ENCODE measurements at regions of chrX and their contacts with region 1.

Region 1: DNA sequence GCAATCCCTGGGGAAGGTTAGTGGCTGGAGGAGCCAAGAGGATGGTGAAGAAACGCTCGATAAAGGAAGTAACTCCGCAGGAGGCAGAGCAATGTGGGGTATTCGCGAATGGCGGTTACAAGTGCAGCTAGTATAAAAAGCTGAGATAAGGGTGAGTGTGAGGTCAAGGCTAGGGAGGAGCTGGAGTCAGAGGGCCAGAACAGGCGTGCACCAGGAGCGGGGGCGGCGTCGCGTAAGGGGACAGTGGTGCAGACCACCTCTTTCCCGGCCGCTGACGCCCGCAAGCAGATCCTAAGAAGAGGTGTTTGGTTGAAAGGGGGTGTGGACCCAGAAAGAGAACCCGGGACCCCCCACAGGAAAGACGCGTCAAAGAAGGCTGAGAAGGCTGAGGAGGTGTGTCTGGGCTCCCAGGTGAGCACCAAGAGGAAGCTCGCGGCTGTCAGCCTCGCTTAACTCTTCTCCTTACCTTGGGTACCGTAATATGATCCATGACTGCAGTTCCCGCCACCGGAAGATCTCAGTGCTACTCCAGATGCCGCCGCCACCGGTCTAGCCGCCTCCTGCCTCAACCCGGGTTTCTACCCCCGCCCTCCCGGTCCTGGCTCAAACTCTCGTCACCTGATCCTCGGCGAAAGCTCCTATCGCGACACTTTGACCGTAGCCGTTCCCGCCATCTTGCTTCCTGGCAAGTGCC is at the start of gene MTMR8:
- DNase-seq: peak; percentile 41
- ATAC-seq: peak; percentile 96
- H3K4me3 ChIP-seq: peak within 1 kb of the TSS; percentile 54 to 60
- H3K27ac ChIP-seq: no peak within 1 kb of the TSS
- H3K4me1 ChIP-seq: peaks cover 0 to 10% of the 10 kb centered on the region in 2 experiments; a peak in 2 of 4 replicates
- H3K27me3 ChIP-seq: no peaks in the 10 kb centered on the region
- CTCF ChIP-seq: no peak
- POLR2A ChIP-seq: no peak
- RAD21 ChIP-seq: no peak
- total RNA-seq, gene MTMR8: 1.1 TPM

Region 2: GRCh38 chrX:64205735-64206491 is 189.1 kb before region 1 on chrX:
- CTCF ChIA-PET with region 1: no interaction called
- POLR2A ChIA-PET with region 1: no interaction called
- RAD21 ChIA-PET with region 1: no interaction called
- intact Hi-C with region 1: loop called (anchors 10 kb)
- DNase-seq: peak; percentile 80
- ATAC-seq: peak; percentile 87
- H3K4me3 ChIP-seq: peak overlapping the region; percentile 54 to 63
- H3K27ac ChIP-seq: peak overlapping the region; percentile 87
- H3K4me1 ChIP-seq: peaks cover 4 to 16% of the 10 kb centered on the region in 2 experiments; a peak in 2 of 4 replicates
- H3K27me3 ChIP-seq: no peaks in the 10 kb centered on the region
- CTCF ChIP-seq: 0 out of 6 replicates have a peak, but pooled peaks of 1 of the 3 experiments have one; percentile 6
- POLR2A ChIP-seq: peak; percentile 68
- RAD21 ChIP-seq: peak; percentile 23

Region 3: DNA sequence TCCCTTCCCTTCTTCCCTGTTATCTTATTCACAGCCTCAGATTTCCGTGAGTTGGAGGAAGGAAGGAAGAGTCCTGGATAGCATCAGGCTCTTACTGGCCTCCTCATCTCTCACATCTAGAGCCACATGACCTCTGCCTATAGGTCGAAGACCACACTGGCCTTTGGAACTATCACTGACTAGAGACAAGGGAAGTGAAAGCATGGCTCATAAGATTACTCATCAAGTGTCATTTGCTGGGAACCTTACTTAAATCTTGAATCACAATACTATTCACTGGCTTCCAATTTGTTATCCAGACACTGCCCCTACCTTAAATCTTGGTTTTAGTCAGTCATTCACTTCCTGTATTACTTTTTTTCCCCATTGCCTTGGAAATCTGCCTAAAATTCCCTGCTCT is 61.8 kb after region 1 on chrX:
- CTCF ChIA-PET with region 1: no interaction called
- POLR2A ChIA-PET with region 1: no interaction called
- RAD21 ChIA-PET with region 1: no interaction called
- intact Hi-C with region 1: no loop called
- DNase-seq: no peak
- ATAC-seq: no peak
- H3K4me3 ChIP-seq: no peak overlapping the region
- H3K27ac ChIP-seq: no peak overlapping the region
- H3K4me1 ChIP-seq: no peaks in the 10 kb centered on the region
- H3K27me3 ChIP-seq: no peaks in the 10 kb centered on the region
- CTCF ChIP-seq: no peak
- POLR2A ChIP-seq: no peak
- RAD21 ChIP-seq: no peak